PC-3 (cell line): ENCODE measurements at regions of chr2 and their contacts with region 1.

Region 1: DNA sequence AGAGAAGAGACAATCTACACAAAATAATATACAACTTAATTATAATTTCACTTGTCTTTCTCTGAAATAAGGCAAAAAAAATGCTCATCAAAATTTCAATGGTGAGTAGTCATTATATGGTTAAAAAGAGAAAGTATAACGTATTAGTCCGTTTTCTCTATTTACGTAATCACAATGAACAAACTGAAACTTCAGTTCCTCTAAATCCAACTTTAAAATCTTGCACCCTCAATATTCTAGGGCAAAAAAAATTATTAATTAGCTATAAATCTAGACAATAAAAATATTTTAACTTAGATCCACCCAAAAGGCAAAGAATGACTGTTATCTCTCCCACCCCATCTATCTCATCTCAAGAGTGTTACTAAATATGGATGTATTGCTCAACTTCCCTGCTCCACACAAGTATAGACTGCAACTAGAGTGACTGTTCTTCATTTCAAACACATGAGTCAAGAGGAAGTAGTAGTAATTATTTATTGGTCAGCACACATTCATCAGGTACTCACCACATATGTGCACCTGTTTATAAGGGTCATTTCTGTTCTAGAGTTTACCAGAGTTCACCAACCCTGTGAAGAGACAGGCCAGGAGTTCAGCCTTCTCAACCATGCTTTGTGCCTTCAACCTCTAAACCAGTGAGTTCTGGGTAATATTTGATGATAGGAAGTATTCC is 36.4 kb downstream of the STK39 start:
- DNase-seq: peak; percentile 95
- ATAC-seq: peak; percentile 88
- H3K4me3 ChIP-seq: peak overlapping the region; percentile 39
- H3K27ac ChIP-seq: peak overlapping the region; percentile 97
- H3K4me1 ChIP-seq: peaks cover 43% of the 10 kb centered on the region
- H3K27me3 ChIP-seq: no peaks in the 10 kb centered on the region
- CTCF ChIP-seq: no peak

Region 2: DNA sequence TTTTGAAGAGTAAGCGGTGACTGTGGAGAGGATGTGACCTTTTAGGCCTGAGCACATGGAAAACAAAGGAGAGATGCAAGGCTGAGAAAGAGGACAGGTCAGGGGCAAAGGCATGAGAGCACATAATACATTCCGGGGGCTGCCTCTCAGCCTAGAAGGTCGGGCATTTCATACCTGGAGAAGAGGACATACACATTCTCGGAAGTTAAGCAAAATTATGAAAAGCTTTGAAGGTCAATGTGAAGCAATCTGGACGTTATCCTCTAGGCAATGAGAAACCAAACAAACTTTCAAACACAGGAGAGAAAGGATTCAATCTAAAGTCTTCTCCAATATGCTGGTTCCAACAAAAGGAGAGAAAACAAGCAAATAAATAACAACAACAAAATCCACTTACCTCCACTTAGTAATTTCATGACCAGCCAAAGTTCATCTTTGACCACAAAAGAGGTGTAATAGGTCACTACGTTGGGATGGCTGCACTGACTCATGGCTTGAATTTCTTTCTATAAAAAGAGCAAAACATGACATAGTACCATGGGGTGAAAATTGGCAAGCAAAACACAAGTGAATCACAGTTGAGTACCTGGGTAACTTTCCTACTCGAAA is 44.0 kb before region 1 on chr2:
- CTCF ChIA-PET with region 1: no interaction called
- POLR2A ChIA-PET with region 1: no interaction called
- intact Hi-C with region 1: loop called (anchors 5 kb)
- DNase-seq: peak; percentile 95
- ATAC-seq: peak; percentile 93
- H3K4me3 ChIP-seq: no peak overlapping the region
- H3K27ac ChIP-seq: peak overlapping the region; percentile 83
- H3K4me1 ChIP-seq: peaks cover 34% of the 10 kb centered on the region
- H3K27me3 ChIP-seq: no peaks in the 10 kb centered on the region
- CTCF ChIP-seq: no peak

Region 3: GRCh38 chr2:168194784-168195522 is 16.1 kb before region 1 on chr2:
- CTCF ChIA-PET with region 1: no interaction called
- POLR2A ChIA-PET with region 1: no interaction called
- intact Hi-C with region 1: loop called (anchors 1 kb)
- DNase-seq: no peak
- ATAC-seq: no peak
- H3K4me3 ChIP-seq: no peak overlapping the region
- H3K27ac ChIP-seq: no peak overlapping the region
- H3K4me1 ChIP-seq: peaks cover 50% of the 10 kb centered on the region
- H3K27me3 ChIP-seq: no peaks in the 10 kb centered on the region
- CTCF ChIP-seq: no peak

Region 4: DNA sequence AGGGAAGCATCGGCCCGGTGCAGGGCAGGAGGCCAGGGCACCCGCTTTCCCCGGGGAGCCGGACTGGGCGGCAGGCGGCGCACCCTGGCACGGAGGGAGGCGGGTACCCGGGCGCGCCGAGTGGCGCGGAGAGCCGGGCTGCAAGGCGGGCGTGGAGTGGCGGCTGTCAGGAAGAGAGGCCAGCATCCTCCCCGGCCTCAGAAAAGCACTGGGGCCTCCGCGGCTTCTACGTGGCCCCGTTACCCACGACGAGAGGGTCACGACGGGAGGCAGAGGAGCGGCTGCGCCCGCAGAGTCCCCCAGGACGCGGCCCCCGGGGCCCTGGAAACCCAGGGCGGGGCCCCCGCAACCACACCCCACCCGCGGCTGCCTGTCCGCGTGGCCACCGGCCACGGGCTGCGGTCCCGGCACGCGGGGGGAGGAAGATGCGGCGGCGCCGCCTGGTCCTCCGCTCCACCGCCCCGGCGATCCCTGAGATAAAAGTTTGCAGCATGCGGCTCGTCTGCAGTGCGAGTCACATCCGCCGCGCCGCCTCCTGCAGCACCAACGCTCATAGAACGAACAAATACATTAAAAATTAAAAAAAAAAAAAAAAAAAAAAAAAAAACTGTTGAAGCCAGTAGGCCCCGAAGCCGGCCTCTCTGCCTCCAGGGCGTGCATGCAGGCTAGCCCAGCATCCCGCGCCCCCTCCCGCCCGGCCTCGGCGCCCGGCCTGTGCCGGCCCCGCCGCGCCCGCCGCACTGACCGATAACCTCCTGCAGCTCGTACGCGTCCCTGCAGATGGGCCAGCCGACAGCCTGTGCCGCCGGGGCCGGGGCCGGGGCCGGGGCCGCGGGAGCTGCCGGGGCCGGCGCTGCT is 35.7 kb after region 1 on chr2:
- CTCF ChIA-PET with region 1: no interaction called
- POLR2A ChIA-PET with region 1: interaction called, 3 read pairs
- intact Hi-C with region 1: loop called (anchors 1 kb)
- DNase-seq: peak; percentile 54
- ATAC-seq: peak; percentile 49
- H3K4me3 ChIP-seq: peak overlapping the region; percentile 98
- H3K27ac ChIP-seq: peak overlapping the region; percentile 53
- H3K4me1 ChIP-seq: peaks cover 36% of the 10 kb centered on the region
- H3K27me3 ChIP-seq: no peaks in the 10 kb centered on the region
- CTCF ChIP-seq: peak; percentile 46

Region 5: DNA sequence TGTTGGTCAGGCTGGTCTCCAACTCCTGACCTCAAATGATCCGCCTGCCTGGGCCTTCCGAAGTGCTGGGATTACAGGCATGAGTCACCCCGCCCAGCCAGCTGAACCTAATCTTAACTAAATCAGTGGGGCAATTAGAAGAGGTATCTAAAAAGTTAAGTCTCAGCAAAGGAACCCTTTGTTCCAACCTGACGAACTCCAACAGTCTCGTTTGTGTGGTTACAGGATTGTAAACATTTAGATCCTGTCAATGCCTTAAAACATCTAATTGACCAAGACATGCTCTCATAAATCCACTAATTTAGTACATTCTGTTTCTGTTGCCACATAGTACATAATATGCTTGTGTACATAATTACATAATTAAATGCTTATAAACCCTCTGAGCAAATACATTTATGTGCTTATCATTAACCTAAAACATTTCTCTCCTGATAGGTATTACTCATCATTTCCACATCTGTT is 67.4 kb after region 1 on chr2:
- CTCF ChIA-PET with region 1: no interaction called
- POLR2A ChIA-PET with region 1: no interaction called
- intact Hi-C with region 1: loop called (anchors 2 kb)
- DNase-seq: peak; percentile 70
- ATAC-seq: peak; percentile 90
- H3K4me3 ChIP-seq: no peak overlapping the region
- H3K27ac ChIP-seq: no peak overlapping the region; the same call in 1 of the 2 replicates
- H3K4me1 ChIP-seq: peaks cover 14% of the 10 kb centered on the region
- H3K27me3 ChIP-seq: no peaks in the 10 kb centered on the region
- CTCF ChIP-seq: no peak